ENCODE measurements at regions of chr2 and their contacts with region 1.

Region 1: GRCh38 chr2:10057231-10058107 is 14.1 kb downstream of the KLF11 start:
- DNase-seq: peak; percentile 65 to 69
- ATAC-seq: peak; percentile 31 to 79 (median 64)
- H3K4me3 ChIP-seq: peak overlapping the region in 6 of 10 donors; percentile 17 to 40 (median 31)
- H3K27ac ChIP-seq: peak overlapping the region in 8 of 10 donors; percentile 36 to 76 (median 70)
- H3K4me1 ChIP-seq: peaks cover 0 to 64% (median 48%) of the 10 kb centered on the region in 9 donors
- H3K27me3 ChIP-seq: no peaks in the 10 kb centered on the region
- CTCF ChIP-seq: no peak

Region 2: GRCh38 chr2:9799665-9800632 is 257.5 kb before region 1 on chr2:
- intact Hi-C with region 1: loop called in 2 of 10 experiments (anchors 5 to 10 kb)
- DNase-seq: peak; percentile 87 to 91
- ATAC-seq: peak; percentile 78 to 93 (median 86)
- H3K4me3 ChIP-seq: peak overlapping the region in 1 of 10 donors; percentile 24
- H3K27ac ChIP-seq: peak overlapping the region in 4 of 10 donors; percentile 5 to 72 (median 36)
- H3K4me1 ChIP-seq: peaks cover 9 to 47% (median 30%) of the 10 kb centered on the region in 9 donors
- H3K27me3 ChIP-seq: no peaks in the 10 kb centered on the region
- CTCF ChIP-seq: peak; percentile 94 to 99 (median 97)

Region 3: GRCh38 chr2:10144771-10145518 is 87.5 kb after region 1 on chr2:
- intact Hi-C with region 1: no loop called
- DNase-seq: no peak
- ATAC-seq: peak in 5 of 8 donors; percentile 11 to 44 (median 29)
- H3K4me3 ChIP-seq: no peak overlapping the region
- H3K27ac ChIP-seq: peak overlapping the region in 2 of 10 donors; percentile 35 to 60
- H3K4me1 ChIP-seq: peaks cover 0 to 17% (median 9%) of the 10 kb centered on the region in 9 donors
- H3K27me3 ChIP-seq: no peaks in the 10 kb centered on the region
- CTCF ChIP-seq: no peak

Measured in heart right ventricle (tissue), 16 donors.